ENCODE measurements at regions of chrX and their contacts with region 1.

Region 1: GRCh38 chrX:52995135-52996020 is 37.1 kb upstream of the FAM156A start:
- DNase-seq: peak; percentile 80 to 94 (median 92)
- H3K4me3 ChIP-seq: peak overlapping the region; percentile 43 to 80 (median 66)
- H3K27ac ChIP-seq: peak overlapping the region; percentile 61 to 98 (median 92)
- H3K27me3 ChIP-seq: peaks cover 0 to 64% (median 26%) of the 10 kb centered on the region in 45 donors
- CTCF ChIP-seq: peak in 54 of 56 donors; percentile 29 to 85 (median 71)

Region 2: DNA sequence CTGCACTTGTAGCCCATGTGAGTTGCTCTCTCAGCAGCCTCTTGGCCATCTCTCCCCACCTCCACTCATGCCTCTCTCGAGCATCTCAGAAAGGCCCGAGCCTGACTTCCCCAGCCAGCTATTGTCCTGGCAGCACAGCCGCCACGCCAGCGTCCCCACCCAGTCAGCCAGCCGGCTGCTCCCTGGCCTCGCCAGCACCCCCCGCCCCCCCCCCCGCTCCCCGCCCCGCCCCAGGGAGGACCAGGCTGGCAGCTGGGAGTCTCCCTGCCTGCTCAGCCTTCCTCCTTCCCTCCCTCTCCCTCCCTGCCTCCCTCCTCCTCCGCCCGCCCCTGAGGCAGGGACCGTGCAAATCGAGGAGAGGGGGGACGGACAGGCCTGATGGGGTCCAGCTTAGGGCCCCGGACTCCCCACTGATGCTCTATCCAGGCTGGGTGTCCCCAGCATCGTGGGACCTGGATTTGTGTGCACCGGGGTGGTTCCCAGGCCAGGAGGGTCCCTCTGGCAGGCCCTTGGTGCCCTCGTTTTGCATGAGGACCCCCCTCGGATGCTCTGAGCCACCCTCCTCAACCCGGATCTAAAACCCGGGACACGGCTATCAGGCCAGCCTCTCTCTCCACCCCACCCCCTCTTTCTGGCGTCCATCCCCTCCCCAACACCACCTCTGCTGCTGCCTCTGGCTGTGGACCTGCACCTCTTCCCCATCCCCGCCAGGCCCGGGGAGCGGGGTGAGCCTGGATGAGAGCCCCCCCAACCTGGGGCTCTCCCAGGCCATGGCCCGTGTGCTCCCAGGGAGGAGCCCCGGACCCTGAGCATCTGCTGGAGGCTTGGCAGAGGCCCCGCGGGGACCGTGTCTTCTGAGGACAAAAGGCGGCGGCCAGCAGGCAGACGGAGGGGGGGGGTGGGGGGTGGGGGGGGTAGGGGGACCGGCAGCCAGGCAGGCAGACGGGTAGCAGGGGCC is 53.1 kb after region 1 on chrX and contains the start of gene GPR173:
- intact Hi-C with region 1: loop called in 1 of 2 experiments (anchors 5 kb)
- DNase-seq: peak; percentile 33 to 74 (median 62)
- H3K4me3 ChIP-seq: peak within 1 kb of the TSS; percentile 28 to 70 (median 57)
- H3K27ac ChIP-seq: peak within 1 kb of the TSS in 48 of 59 donors; percentile 20 to 88 (median 77)
- H3K27me3 ChIP-seq: peaks cover 0 to 71% (median 16%) of the 10 kb centered on the region in 45 donors
- CTCF ChIP-seq: peak in 1 of 56 donors; percentile 19
- total RNA-seq, gene GPR173: 13.8 to 28.3 (median 20.2) TPM